ENCODE measurements at regions of chr7 and their contacts with region 1.

Region 1: DNA sequence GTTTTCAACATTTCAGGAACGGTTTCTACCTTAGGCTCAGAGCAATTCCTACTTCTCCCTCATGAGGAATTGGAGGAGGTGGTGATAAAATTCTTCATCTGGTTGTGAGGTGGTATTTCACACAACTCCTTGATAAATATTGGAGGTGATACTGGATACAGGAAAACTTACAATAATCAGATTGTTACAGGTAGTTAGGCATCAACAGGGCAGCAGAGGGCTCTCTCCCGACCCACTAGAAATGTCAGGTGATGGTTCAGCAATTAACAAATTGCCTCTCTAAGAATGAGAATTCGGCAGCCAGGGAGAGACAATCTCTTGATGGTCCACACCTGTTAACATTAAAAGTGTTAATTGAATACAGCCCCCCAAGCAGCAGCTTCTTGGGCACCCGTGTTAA is 22.6 kb downstream of the ZNF786 start:
- DNase-seq: no peak
- ATAC-seq: no peak

Region 2: DNA sequence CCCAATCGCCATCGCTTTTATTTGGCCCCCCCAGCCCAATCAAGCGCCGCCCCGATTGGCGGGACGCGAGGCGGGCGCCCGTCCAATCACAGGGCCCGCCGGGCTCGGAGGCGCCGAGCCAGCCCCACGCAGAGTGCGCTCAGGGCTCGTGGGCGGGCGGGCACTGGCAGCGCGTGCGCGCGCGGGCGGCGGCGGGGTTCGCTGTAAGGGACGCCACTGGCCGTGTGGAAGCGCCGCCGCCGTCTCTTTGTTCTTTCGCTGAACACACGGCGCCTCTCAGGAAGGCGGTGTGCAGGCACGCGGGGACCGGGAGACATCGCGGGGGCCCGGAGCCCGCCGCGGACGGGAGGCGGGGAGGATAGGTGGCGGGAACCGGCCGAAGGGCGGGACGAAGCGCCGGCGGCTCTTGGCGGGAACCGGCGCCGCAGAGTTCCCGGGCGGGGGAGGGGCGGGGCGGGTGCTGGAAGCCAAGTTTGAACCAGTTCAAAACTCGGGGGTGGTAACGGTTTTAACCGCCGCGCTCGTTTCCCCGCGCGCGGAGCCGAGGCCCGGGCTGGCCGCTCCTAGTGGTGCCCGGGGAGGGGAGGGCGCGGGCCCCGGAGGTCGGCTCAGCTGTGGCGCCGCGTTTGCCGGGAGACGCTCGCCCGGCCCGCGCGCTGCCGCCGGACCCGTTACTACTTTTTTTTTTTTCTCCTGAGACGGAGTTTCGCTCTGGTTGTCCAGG is 183.4 kb before region 1 on chr7:
- intact Hi-C with region 1: no loop called
- DNase-seq: peak; percentile 96
- ATAC-seq: peak; percentile 98

Region 3: DNA sequence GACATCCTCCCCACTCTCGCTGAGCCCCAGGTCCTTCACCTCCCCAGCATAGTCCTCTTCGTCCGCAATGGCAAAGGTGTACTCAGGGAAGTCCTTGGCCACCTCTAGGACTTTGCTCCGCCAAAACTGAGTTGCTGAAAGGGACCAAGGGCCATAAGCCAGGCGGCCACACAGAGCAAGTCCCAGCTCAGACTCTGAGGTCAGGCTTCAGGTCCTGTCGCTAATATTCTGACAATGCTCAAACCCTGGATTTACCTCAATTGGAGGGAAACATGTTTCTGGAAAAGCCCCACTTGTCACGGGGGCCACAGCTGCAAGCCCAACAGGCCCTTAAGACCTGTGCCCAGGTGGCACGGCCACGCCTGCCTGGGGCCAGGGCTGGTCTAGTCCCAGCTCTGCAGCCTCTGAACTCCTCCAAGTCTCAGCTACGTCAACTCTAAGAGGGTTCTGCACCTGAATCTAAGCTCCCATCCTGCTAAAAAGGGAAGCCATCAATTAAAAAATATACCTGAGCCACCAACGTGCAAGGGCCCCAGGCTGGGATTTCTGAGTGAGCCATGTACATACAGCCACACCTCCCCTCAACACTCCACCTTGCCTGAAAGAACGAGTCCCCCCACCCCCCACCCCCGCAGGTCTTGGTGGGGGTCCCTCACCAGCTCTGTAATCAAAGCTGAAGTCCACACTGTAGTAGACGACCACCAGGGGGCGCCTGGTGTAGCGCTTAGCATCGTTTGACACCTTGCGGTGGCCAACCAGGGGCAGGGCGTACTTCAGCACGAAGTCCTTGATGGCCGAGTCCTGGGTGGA is 62.4 kb before region 1 on chr7:
- intact Hi-C with region 1: loop called (anchors 1 kb)
- DNase-seq: peak; percentile 92
- ATAC-seq: peak; percentile 83

Measured in Right ventricle myocardium inferior (tissue), 1 donor.